ENCODE measurements at regions of chr9 and their contacts with region 1.

Region 1: GRCh38 chr9:28342815-28343338 is 769.6 kb upstream of the C9orf72 start:
- DNase-seq: no peak
- ATAC-seq: no peak
- H3K4me3 ChIP-seq: no peak overlapping the region
- H3K27ac ChIP-seq: no peak overlapping the region
- H3K4me1 ChIP-seq: no peaks in the 10 kb centered on the region
- H3K27me3 ChIP-seq: no peaks in the 10 kb centered on the region

Region 2: DNA sequence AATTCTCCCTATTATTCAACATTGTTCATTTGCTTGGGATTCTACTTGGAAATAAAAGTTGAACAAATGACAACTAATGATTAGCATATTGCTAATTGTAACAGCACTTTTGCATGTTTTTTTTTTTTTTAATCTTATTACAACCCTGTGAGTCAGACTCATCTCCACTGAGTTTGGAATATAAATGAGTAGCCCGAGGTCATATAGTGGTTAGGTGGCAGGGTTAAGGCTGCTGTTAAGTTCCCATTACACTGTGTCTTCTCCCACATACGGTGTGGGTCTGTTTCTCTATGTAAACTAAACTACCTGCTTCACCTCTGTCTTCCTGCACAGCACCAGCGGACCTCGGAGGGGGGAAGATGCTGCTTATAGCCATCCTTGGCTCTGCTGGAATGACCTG is 1138.3 kb before region 1 on chr9:
- intact Hi-C with region 1: no loop called
- DNase-seq: no peak
- ATAC-seq: no peak
- H3K4me3 ChIP-seq: no peak overlapping the region
- H3K27ac ChIP-seq: peak overlapping the region in 1 of 2 donors; percentile 21
- H3K4me1 ChIP-seq: peaks cover 0 to 6% of the 10 kb centered on the region in 2 donors
- H3K27me3 ChIP-seq: no peaks in the 10 kb centered on the region

Region 3: DNA sequence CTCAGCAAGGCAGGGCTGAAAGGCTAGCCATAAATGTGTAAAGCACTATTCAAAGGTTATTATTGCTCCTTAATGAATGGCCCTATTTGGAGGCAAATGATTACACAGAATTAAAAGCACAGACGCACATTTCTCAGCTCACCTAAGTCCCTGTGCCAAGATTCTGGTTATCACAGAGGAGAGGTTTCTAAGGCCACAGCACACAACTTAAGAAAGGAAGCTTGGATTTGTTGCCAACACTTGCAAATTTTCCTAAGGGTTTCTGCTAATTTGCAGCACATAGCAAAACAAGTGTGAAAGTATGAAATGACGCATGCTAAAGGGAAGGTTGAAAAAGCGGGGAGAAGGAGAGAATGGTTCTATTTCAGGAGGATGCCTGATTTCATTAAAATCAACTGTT is 64.5 kb after region 1 on chr9:
- intact Hi-C with region 1: loop called in 1 of 2 experiments (anchors 10 kb)
- DNase-seq: no peak
- ATAC-seq: no peak
- H3K4me3 ChIP-seq: no peak overlapping the region
- H3K27ac ChIP-seq: no peak overlapping the region
- H3K4me1 ChIP-seq: no peaks in the 10 kb centered on the region
- H3K27me3 ChIP-seq: no peaks in the 10 kb centered on the region

Measured in aorta (tissue), 5 donors.